ENCODE measurements at regions of chr17 and their contacts with region 1.

Region 1: DNA sequence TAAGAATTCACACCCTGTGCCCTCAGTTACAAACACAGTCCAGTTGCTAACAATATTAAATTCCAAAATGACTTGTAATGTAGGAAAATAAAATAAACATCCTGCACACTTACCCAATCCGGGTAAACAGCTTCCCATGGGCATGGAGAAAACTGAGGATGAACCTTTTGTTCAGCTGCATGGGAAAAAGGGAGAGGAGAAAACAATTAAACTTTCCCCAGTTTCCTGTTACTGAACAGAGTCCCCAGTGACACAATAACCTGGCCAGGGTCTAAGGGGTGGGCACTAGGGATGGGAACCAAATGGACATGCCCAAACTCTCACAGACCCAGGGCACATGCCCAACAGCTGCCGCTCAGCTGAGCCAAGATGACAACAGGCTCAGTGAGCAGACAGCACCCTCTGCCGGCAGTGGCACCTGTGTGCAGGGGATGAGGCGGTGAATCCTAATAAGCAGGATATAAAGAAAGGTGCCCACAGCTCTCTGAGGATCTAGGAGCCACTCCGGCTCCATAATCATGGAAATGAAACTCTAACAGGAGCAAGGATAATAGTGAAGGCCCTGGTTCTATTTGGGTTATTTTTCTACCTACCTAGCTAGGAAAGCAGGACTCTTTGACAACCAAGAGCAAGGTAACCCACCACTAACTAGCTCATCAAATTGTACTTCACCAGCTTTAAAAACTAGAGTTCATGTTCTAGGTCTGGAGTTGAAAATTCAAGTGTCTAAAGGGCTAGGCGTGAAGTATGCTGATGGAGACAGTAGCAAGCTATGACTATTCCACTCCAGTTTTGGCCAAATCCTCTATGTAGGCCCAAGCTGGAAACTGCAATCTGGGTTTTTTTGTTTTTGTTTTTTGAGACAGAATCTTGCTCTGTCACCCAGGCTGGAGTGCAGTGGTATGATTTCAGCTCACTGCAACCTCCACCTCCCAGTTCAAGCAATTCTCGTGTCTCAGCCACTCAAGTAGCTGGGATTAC is 58.8 kb downstream of the SMG6 start:
- DNase-seq: peak; percentile 85
- H3K4me3 ChIP-seq: no peak overlapping the region
- H3K27ac ChIP-seq: peak overlapping the region; percentile 52 to 74 (median 72)
- H3K4me1 ChIP-seq: peaks cover 2 to 20% (median 5%) of the 10 kb centered on the region in 4 donors
- H3K27me3 ChIP-seq: no peaks in the 10 kb centered on the region
- CTCF ChIP-seq: peak; percentile 95 to 97 (median 97)
- EP300 ChIP-seq: no peak
- POLR2A ChIP-seq: no peak

Region 2: GRCh38 chr17:2054512-2055291 is 190.1 kb before region 1 on chr17 and contains the start of gene HIC1:
- in situ Hi-C with region 1: no loop called
- intact Hi-C with region 1: loop called (anchors 1 kb)
- DNase-seq: peak; percentile 77
- H3K4me3 ChIP-seq: peak within 1 kb of the TSS; percentile 24 to 65 (median 42)
- H3K27ac ChIP-seq: peak within 1 kb of the TSS; percentile 85 to 92 (median 90)
- H3K4me1 ChIP-seq: peaks cover 8 to 75% (median 67%) of the 10 kb centered on the region in 4 donors
- H3K27me3 ChIP-seq: peaks cover 76% of the 10 kb centered on the region
- CTCF ChIP-seq: peak; percentile 60 to 99 (median 93)
- EP300 ChIP-seq: no peak
- POLR2A ChIP-seq: peak; percentile 74
- total RNA-seq, gene HIC1: 9.1 to 32.5 (median 14.7) TPM

Region 3: GRCh38 chr17:2064980-2065785 is 179.7 kb before region 1 on chr17:
- in situ Hi-C with region 1: loop called (anchors 5 to 10 kb)
- intact Hi-C with region 1: no loop called
- DNase-seq: peak; percentile 46
- H3K4me3 ChIP-seq: no peak overlapping the region
- H3K27ac ChIP-seq: peak overlapping the region; percentile 85 to 92 (median 90)
- H3K4me1 ChIP-seq: peaks cover 30 to 78% (median 46%) of the 10 kb centered on the region in 4 donors
- H3K27me3 ChIP-seq: no peaks in the 10 kb centered on the region
- CTCF ChIP-seq: peak in 3 of 5 experiments; percentile 16 to 31 (median 18)
- EP300 ChIP-seq: no peak
- POLR2A ChIP-seq: no peak

Measured in transverse colon (tissue), 4 donors.